H1 (cell line): ENCODE measurements at regions of chr10 and their contacts with region 1.

Region 1: DNA sequence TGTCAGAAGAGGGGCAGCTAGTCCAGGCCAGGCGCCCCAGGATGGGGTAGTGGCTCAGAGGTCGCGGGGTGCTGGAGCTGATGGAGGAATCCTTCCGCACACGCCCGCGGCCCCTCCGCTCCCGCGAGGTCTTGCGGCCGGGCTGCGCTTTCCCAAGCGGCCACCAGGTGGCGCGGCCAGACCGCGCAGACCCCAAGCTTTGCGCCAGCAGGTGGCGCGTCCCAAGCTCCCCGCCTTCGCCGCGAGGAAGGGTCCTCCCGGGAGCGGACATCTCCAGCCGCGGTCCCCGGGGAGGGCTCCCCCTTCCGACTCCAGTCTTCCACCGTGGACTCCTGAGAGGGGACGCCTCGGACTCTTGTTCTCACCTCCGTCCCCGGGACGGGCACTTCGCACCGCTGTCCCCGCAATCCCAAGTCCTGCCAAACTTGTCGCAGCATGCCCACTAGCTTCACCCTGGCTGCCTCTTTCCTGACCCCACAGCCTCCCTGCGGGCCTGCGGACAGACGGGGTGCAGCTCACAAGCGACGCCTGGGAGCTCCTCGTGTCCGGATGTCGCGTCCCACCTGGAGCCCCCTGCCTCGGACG is 19.4 kb downstream of the KCNK18 start:
- DNase-seq: peak; percentile 59 to 93
- H3K4me3 ChIP-seq: peak overlapping the region; percentile 29 to 81 (median 70)
- H3K27ac ChIP-seq: no peak overlapping the region
- H3K4me1 ChIP-seq: peaks cover 0 to 7% (median 7%) of the 10 kb centered on the region in 4 experiments; a peak in 5 of 7 replicates
- H3K27me3 ChIP-seq: peaks cover 7 to 29% (median 25%) of the 10 kb centered on the region in 4 experiments
- CTCF ChIP-seq: peak; percentile 99 to 100 (median 99)
- EP300 ChIP-seq: peak in 1 of 2 experiments; percentile 38; a peak in 1 of 3 replicates
- POLR2A ChIP-seq: no peak
- RAD21 ChIP-seq: peak; percentile 94 to 96

Region 2: DNA sequence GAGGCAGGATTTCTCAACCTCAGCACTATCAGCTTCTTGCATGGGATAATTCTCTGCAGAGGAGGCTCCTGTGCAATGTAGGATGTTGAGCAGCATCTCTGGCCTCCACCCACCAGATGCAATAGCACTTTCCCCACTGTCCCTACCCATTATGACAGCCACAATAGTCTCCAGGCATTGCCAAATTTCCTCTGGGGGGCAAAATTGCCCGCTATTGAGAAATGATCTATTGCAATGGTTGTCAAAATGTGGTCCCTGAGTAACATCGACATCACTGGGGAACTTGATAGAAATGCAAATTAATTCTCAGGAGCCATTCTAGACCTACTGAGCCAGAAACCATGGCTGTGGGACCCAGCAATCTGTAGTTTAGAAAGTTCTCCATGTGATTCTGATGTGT is 12.4 kb before region 1 on chr10:
- CTCF ChIA-PET with region 1: interaction called, 50 read pairs
- POLR2A ChIA-PET with region 1: interaction called, 3 read pairs
- DNase-seq: no peak
- H3K4me3 ChIP-seq: no peak overlapping the region
- H3K27ac ChIP-seq: no peak overlapping the region
- H3K4me1 ChIP-seq: 0 out of 7 replicates have a peak, but pooled peaks cover 0 to 4% (median 0%) of the 10 kb centered on the region in 4 experiments
- H3K27me3 ChIP-seq: peaks cover 0 to 1% (median 0%) of the 10 kb centered on the region in 4 experiments; a peak in 1 of 7 replicates
- CTCF ChIP-seq: no peak
- EP300 ChIP-seq: no peak
- POLR2A ChIP-seq: no peak
- RAD21 ChIP-seq: no peak

Region 3: DNA sequence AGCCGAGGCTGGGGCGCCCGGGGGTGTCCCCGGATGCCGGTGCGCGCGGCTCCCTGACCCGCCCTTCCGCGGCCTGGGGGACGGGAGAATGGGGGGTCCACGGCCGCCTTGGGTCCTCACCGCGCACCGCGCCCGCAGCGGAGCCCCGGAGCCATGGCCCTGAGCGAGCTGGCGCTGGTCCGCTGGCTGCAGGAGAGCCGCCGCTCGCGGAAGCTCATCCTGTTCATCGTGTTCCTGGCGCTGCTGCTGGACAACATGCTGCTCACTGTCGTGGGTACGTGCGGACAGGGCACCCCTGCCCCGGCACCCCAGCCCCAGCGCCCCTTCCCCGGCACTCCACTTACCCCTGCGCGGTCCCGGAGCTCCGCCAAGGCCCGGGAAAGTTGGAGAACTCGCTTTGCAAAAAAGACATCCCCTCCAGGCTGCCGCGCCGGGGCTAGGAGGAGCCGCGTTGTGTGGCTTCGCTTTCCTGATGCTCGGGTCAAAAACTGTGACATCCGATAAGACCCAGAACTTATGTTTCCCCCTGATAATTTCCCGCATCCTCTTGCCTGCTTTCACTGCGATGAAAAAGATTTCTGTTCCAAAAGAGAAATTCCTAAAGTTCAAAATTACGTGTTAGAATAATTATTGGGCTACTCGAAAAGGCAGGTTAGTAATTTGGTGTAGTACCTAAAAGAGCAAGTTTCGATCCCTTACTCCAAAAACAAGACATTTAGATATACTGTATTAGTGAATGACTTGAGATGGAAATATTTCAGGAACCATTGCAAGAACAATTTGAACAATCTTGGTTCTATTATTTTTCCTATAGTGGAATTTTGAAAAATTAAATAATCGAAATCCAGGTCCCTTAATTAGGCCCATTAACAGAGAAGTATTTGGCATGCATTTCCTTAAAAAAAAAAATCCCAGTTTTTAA is 25.1 kb after region 1 on chr10:
- CTCF ChIA-PET with region 1: interaction called, 14 read pairs
- POLR2A ChIA-PET with region 1: interaction called, 3 read pairs
- DNase-seq: peak in 1 of 2 experiments; percentile 72
- H3K4me3 ChIP-seq: peak overlapping the region; percentile 55 to 87 (median 65)
- H3K27ac ChIP-seq: no peak overlapping the region
- H3K4me1 ChIP-seq: peaks cover 0 to 6% (median 3%) of the 10 kb centered on the region in 4 experiments; a peak in 5 of 7 replicates
- H3K27me3 ChIP-seq: peaks cover 2 to 24% (median 13%) of the 10 kb centered on the region in 4 experiments
- CTCF ChIP-seq: no peak
- EP300 ChIP-seq: no peak
- POLR2A ChIP-seq: no peak
- RAD21 ChIP-seq: no peak

Region 4: GRCh38 chr10:117284716-117285494 is 68.2 kb after region 1 on chr10:
- CTCF ChIA-PET with region 1: interaction called, 12 read pairs
- POLR2A ChIA-PET with region 1: no interaction called
- DNase-seq: no peak
- H3K4me3 ChIP-seq: no peak overlapping the region
- H3K27ac ChIP-seq: no peak overlapping the region
- H3K4me1 ChIP-seq: no peaks in the 10 kb centered on the region
- H3K27me3 ChIP-seq: no peaks in the 10 kb centered on the region
- CTCF ChIP-seq: no peak
- EP300 ChIP-seq: no peak
- POLR2A ChIP-seq: no peak
- RAD21 ChIP-seq: no peak

Region 5: GRCh38 chr10:117327262-117327661 is 110.6 kb after region 1 on chr10:
- CTCF ChIA-PET with region 1: interaction called, 14 read pairs
- POLR2A ChIA-PET with region 1: no interaction called
- DNase-seq: no peak
- H3K4me3 ChIP-seq: peak overlapping the region in 1 of 4 experiments; percentile 12; a peak in 1 of 8 replicates
- H3K27ac ChIP-seq: no peak overlapping the region
- H3K4me1 ChIP-seq: peaks cover 0 to 19% (median 8%) of the 10 kb centered on the region in 4 experiments; a peak in 4 of 7 replicates
- H3K27me3 ChIP-seq: no peaks in the 10 kb centered on the region
- CTCF ChIP-seq: no peak
- EP300 ChIP-seq: no peak
- POLR2A ChIP-seq: no peak
- RAD21 ChIP-seq: no peak

Region 6: DNA sequence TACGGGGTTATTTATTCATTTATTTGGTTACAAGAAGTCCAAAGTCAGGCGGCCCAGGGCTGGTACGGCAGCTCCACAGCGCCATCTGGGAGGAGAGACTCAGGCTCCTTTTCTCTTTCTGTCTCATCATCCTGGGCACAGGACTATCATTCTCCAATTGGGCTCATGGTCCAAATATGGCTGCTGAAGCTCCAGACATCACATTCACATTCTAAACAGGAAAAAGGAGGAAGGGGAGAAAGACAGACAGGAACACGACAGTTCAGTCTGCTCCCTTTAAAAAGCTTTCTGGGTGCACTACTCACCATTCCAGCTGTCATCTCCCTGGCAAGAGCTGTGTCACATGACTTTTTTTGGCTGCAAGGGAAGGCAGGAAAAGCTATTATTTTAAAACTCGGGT is 232.9 kb after region 1 on chr10:
- CTCF ChIA-PET with region 1: interaction called, 17 read pairs
- POLR2A ChIA-PET with region 1: no interaction called
- DNase-seq: peak in 1 of 2 experiments; percentile 59
- H3K4me3 ChIP-seq: no peak overlapping the region
- H3K27ac ChIP-seq: no peak overlapping the region
- H3K4me1 ChIP-seq: no peaks in the 10 kb centered on the region
- H3K27me3 ChIP-seq: no peaks in the 10 kb centered on the region
- CTCF ChIP-seq: peak; percentile 42 to 60 (median 59)
- EP300 ChIP-seq: no peak
- POLR2A ChIP-seq: no peak
- RAD21 ChIP-seq: peak; percentile 61 to 71; a peak in 3 of 4 replicates

Region 7: GRCh38 chr10:117496616-117497028 is 279.9 kb after region 1 on chr10:
- CTCF ChIA-PET with region 1: interaction called, 11 read pairs
- POLR2A ChIA-PET with region 1: no interaction called
- DNase-seq: peak; percentile 63 to 93
- H3K4me3 ChIP-seq: no peak overlapping the region
- H3K27ac ChIP-seq: no peak overlapping the region
- H3K4me1 ChIP-seq: peaks cover 0 to 3% (median 1%) of the 10 kb centered on the region in 4 experiments; a peak in 2 of 7 replicates
- H3K27me3 ChIP-seq: peaks cover 0 to 6% (median under 1%) of the 10 kb centered on the region in 4 experiments; a peak in 2 of 7 replicates
- CTCF ChIP-seq: peak; percentile 90 to 95 (median 92)
- EP300 ChIP-seq: peak in 1 of 2 experiments; percentile 41; a peak in 1 of 3 replicates
- POLR2A ChIP-seq: no peak
- RAD21 ChIP-seq: peak; percentile 99